ENCODE measurements at regions of chr3 and their contacts with region 1.

Region 1: DNA sequence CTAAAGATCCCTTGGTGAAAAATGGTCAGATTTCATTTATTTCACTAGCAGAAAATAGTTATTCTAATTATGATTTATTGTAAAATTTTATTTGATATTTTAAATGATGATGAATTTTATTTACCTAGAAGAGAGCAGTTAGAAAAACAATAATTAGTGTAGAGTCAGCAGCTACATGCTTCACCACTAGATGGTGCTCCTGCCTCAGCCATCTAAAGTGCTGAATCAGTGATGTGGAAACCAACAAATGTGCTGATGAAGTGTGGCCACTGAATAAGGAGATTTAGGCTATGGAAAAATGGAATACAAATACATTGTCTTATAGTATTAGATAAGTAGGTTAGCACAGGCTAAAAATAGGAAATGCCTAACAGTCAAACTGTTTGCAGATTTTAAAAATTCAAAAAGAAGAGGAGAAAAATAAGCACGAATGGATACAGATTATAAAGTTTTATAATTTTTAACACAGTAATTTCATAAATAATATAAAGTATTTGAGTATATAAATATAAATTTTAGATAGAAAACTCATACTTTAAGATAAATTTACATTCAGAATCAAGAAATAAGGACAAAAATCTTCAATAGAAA is 109.8 kb downstream of the PPP2R3A start:
- DNase-seq: peak in 3 of 4 donors; percentile 45 to 89 (median 83)
- ATAC-seq: peak; percentile 95
- H3K4me3 ChIP-seq: no peak overlapping the region
- H3K27ac ChIP-seq: no peak overlapping the region
- H3K4me1 ChIP-seq: peaks cover 4 to 6% of the 10 kb centered on the region in 2 donors
- H3K27me3 ChIP-seq: no peaks in the 10 kb centered on the region
- CTCF ChIP-seq: peak; percentile 75 to 89

Region 2: DNA sequence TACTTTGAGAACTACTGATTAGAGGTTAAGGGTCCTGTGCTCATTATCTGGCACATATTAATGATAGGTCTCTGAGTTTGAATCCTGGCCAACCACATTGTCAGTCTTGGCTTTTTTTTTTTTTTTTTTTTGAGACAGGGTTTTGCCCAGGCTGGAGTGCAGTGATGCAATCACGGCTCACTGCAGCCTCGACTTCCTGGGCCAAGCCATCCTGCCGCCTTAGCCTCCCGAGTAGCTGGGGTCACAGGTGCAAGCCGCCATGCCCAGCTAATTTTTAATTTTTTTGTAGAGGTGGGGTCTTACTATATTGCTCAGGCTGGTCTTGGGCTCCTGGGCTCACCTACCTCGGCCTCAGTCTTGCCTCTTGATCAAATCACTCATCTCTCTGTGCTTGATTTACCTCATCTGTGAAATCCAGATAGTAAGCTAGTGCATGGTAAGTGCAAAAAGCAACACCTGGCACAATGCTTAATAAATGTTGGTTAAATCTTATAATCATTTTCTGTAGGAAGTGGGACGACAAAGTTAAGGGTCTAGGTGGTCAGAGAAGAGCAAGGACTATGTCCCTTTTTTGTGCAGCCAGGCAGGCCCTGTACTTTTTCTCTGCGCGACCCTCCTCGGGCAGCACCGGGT is 174.4 kb after region 1 on chr3:
- intact Hi-C with region 1: loop called in 1 of 2 experiments (anchors 10 kb)
- DNase-seq: no peak
- ATAC-seq: no peak
- H3K4me3 ChIP-seq: peak overlapping the region; percentile 56 to 78
- H3K27ac ChIP-seq: peak overlapping the region; percentile 90 to 92
- H3K4me1 ChIP-seq: peaks cover 7 to 23% of the 10 kb centered on the region in 2 donors
- H3K27me3 ChIP-seq: no peaks in the 10 kb centered on the region
- CTCF ChIP-seq: no peak

Region 3: DNA sequence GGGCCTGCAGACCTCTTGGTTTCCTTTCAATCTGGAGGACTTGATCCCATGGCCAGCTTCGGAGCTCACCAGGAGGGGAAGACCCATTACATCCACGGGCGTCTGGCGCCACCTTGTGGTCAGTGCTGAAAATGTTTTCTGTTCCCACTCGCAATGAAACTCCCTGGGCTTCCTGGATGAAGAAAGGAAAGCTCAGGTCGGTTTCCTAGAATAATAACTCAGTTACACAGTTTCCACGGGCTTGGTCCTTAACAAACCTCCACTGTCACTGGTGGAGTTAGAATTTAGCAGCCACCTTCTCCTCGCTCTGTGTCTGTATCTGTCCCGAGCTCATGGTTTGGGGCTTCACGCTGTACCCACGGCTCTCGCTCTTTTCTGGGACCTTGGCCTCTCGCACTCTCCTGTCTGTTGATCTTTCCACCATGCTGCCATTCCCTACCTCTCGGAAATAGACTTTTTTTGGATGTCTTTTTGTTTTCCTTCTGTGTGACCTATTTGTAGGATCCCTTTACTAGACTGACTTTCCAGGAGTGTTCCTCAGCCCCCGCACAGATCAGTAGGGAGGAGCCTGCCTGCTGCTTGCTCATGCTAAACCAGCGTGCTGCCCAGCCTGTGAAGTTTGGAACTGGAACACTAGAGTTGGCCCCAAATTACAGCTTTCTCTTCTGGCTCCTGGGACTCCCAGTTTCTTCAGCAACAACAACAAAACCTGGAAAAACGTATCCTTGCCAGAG is 938.8 kb after region 1 on chr3:
- intact Hi-C with region 1: loop called in 1 of 2 experiments (anchors 5 kb)
- DNase-seq: peak; percentile 89 to 93 (median 92)
- ATAC-seq: peak; percentile 99
- H3K4me3 ChIP-seq: peak overlapping the region; percentile 23 to 37
- H3K27ac ChIP-seq: peak overlapping the region in 1 of 2 donors; percentile 1
- H3K4me1 ChIP-seq: peaks cover 0 to 7% of the 10 kb centered on the region in 2 donors
- H3K27me3 ChIP-seq: no peaks in the 10 kb centered on the region
- CTCF ChIP-seq: peak; percentile 87 to 89